Activated T-helper 2 cell treated with anti-CD3 and anti-CD28 coated beads, Interferon-gamma antibody, Interleukin-2, Interleukin-4, amounts not matched to agents 10 μg/mL and 5 μg/mL and 100 μg/mL, durations not matched to agents 14 hours and 24 hours and 36 hours (primary cell): ENCODE measurements at regions of chr1 and their contacts with region 1.

Region 1: DNA sequence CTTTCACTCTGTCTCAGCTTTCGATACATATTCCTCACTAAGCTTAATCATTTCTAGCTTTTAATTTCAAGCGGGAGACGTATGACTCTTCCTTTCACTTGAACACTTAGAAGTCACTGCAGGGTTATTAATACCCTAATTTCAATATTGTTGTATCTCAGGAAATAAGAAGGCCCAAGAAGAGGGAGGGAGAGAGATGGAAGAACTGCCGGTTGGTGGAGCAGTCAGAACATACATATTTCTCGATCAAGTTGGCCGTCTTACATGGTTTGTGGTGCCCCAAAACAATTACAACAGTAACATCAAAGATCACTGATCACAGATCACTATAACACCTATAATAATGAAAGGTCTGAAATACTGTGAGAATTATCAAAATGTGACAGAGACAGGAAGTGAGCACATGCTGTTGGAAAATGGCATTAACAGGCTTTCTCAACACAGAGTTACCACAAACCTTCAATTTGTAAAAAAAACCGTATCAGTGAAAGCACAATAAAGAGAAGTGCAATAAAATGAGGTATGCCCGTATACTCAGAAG is 145.4 kb upstream of the HP1BP3 start:
- DNase-seq: no peak
- H3K4me3 Mint-ChIP-seq: peak overlapping the region; percentile 56
- H3K27ac Mint-ChIP-seq: peak overlapping the region; percentile 84
- H3K4me1 Mint-ChIP-seq: peaks cover 35% of the 10 kb centered on the region
- H3K27me3 Mint-ChIP-seq: no peaks in the 10 kb centered on the region

Region 2: GRCh38 chr1:21022279-21023040 is 90.0 kb after region 1 on chr1:
- intact Hi-C with region 1: loop called (anchors 1 kb)
- DNase-seq: no peak
- H3K4me3 Mint-ChIP-seq: peak overlapping the region; percentile 48
- H3K27ac Mint-ChIP-seq: peak overlapping the region; percentile 86
- H3K4me1 Mint-ChIP-seq: peaks cover 15% of the 10 kb centered on the region
- H3K27me3 Mint-ChIP-seq: no peaks in the 10 kb centered on the region

Region 3: DNA sequence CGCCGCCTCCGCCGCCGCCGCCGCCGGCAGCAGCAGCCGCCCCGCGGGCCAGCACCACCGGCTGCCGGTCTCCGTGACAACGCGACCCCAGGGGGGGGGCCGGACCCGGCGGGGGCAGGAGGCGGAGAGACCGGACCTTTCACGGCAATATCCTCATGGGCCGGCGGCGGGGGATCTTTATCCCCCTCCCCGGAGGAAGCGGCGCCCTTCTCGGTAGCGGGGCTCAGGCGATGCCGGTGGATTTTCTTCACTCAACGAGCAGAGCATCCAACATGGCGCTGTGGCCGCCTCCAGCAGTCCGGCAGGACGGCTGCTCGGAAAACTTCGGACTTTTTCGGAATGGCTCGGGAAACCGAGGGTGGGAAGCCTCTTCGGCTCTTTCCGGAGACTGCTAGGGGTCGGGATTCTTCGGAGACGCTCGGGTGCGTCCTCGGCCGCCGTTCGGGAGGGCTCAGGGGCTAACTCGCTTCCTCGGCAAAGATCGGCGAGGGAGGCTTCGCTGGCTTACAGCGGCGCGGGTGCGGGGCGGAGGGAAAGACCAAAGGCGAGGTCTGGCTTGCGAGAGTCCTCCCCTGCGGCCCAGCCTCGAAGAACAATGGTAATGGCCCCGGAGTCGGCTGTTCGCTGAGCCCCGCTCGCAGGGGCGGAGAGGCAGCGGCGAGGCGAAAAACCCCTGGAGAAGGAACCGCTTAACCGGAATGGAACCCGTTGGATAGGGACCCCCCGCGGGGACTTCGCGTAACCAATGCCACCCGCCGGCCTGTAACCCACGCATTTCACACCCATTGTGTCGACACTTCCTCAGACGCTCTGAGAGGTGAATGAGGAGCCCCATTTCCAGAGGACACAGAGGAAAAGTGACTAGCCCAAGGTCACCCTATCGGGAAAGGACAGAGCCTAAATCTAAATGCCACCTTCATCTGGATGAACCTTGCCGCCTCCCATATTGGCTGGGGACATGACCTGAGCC is 244.4 kb after region 1 on chr1 and contains the start of gene EIF4G3:
- intact Hi-C with region 1: loop called (anchors 2 kb)
- DNase-seq: peak; percentile 99
- H3K4me3 Mint-ChIP-seq: peak within 1 kb of the TSS; percentile 86
- H3K27ac Mint-ChIP-seq: peak within 1 kb of the TSS; percentile 86
- H3K4me1 Mint-ChIP-seq: peaks cover 18% of the 10 kb centered on the region
- H3K27me3 Mint-ChIP-seq: peaks cover 4% of the 10 kb centered on the region
- total RNA-seq, gene EIF4G3: 64.2 and 66.0 TPM in 2 replicates